ENCODE measurements at regions of chr16 and their contacts with region 1.

Region 1: DNA sequence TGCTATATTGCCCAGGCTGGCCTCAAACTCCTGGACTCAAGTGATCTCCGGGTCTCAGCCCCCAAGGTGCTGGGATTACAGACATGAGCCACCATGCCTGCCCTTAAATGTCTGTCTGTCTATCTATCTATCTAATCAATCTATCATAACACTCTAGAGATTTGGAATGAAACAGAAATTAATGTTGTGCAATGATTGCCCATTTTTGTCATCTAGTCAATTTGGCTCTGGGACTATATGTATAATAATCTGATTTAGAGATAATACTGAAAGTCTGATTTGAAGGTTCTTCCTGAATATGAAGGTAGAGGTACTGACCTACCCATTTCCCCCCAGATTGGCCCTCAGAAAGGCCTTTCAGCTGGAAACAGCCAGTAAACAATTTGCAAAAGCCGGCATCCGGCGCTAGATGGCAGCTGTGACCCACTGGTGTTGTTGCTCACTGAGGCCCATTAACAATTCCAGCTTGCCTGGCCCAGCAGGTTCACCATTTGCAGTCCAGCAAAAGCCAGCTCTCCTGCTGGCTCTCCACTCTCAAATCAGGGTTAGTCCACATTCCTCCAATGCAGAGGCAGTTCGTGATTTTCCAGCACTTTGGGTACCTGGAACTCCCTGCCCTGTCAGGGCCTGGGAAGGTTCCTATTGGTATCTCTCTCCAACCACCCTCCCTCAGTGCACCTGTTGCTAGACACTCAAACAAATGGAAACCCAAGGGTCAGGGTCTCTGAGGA is 22.9 kb upstream of the C16orf87 start:
- DNase-seq: peak; percentile 75
- ATAC-seq: peak; percentile 83 to 87

Region 2: GRCh38 chr16:46929378-46930332 is 75.8 kb after region 1 on chr16:
- intact Hi-C with region 1: loop called in 1 of 2 experiments (anchors 5 kb)
- DNase-seq: peak; percentile 62
- ATAC-seq: peak; percentile 70 to 74

Region 3: GRCh38 chr16:48164907-48165726 is 1311.2 kb after region 1 on chr16:
- intact Hi-C with region 1: loop called in 1 of 2 experiments (anchors 5 kb)
- DNase-seq: peak; percentile 72
- ATAC-seq: peak; percentile 96 to 97

Measured in left cardiac atrium (tissue), 4 donors.